Lower leg skin (tissue), 4 donors: ENCODE measurements at regions of chr12 and their contacts with region 1.

Region 1: DNA sequence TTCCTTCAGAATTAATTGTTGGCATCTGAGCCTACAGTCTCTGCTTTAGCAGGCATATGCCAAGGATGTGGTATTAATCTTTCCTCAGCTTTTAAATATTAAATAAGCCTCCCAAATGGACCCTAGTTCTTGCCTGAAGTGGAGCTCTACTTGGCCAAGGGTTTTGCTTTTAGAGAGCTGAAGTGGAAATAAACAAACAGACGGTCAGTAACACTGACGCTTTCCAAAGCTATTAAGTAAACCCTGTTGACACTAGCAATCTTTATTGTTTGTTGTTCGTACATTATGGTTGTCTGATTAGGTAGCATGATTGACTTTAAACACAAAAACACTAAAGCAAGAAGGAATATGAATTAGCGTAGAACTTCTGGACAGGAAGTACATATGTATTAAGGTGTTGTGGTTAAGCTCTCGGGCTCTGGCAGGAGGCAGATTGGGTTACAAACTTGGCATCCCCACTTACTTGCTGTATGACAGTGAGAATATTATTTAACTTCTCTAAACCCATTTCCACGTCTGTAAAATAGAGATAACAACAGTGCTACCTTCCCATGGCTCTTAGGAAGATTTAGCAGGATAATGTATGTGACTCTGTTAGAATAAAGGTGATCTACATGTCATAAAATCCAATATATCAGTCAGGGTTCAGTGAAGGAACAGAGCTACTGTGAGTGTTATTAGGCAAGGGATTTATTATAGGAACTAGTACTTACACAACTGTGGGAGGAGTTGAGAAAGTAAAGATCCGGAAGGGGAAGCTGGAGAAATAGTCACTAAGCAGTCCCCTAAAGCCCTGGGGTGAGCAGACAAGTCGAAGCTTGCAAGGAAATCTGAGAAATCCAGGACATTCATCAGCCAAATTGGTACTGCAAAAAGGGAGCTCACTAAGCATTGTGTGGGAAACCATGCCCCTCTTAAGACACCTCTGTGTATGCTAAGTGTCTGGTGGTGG is 92.2 kb upstream of the ATF7IP start:
- DNase-seq: peak in 1 of 2 donors; percentile 25
- H3K4me3 ChIP-seq: no peak overlapping the region
- CTCF ChIP-seq: no peak
- POLR2A ChIP-seq: no peak

Region 2: DNA sequence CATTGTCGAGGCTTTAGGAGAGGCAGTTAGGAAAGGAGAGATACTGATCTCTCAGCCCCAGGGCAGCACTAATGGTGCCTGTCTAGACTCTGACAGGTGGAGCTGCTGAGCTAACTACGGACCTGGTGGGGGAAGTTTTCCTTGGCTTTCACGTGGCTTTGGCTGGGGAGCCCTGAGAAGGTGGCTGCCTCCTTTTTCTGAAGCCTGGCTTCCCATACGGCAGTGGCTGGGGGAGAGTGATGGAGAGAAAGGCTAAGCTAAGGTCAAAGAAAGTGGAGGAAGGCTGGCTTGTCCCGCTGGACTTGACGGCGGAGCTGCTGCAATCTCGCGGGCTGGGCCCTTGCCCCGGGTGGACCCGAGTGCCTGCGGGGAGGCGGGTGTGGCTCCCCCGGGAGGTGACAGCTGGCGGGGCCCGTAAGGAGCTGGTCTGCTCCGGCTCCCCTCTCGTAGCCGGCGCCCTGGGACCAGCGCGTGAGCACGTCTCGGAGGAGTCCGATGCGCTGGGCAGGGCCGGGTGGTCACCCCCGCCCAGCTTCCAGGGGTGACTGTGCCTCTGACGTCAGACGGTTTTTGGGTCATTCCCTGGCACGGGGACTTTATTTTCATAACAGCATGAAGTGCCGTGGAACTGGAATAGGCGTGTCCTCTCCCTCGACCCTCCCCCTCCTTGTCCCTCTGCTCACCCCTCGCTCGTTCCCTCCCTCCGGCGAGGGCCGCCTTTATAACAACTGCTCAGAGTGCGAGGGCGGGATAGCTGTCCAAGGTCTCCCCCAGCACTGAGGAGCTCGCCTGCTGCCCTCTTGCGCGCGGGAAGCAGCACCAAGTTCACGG is 1382.2 kb before region 1 on chr12 and contains the start of gene GPRC5A:
- intact Hi-C with region 1: no loop called
- DNase-seq: peak; percentile 86 to 97
- H3K4me3 ChIP-seq: peak within 1 kb of the TSS; percentile 17
- CTCF ChIP-seq: no peak
- POLR2A ChIP-seq: no peak
- total RNA-seq, gene GPRC5A: 2.1 to 9.4 (median 5.3) TPM

Region 3: DNA sequence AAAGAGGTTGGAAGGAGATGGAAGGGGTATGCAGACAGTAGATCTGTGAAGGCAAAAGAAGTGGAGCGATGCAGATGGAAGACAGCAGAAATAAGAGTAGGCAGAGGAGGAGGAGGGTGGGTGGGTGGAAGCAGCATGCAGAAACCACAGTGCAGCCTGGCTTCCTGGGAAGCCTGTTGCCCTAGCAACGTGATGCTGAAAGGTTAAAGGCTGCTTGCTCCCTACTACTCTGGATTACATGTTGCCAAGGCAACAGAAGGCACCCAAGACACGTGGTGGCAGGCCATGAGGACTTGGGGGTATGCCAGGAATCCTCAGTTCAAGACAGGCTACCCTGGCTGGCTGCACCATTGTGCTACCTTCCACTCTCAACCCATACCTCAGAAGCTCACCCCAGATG is 421.4 kb before region 1 on chr12:
- intact Hi-C with region 1: no loop called
- DNase-seq: no peak
- H3K4me3 ChIP-seq: no peak overlapping the region
- CTCF ChIP-seq: no peak
- POLR2A ChIP-seq: no peak

Region 4: GRCh38 chr12:14225064-14225463 is 48.2 kb before region 1 on chr12:
- intact Hi-C with region 1: no loop called
- DNase-seq: no peak
- H3K4me3 ChIP-seq: no peak overlapping the region
- CTCF ChIP-seq: no peak
- POLR2A ChIP-seq: no peak

Region 5: DNA sequence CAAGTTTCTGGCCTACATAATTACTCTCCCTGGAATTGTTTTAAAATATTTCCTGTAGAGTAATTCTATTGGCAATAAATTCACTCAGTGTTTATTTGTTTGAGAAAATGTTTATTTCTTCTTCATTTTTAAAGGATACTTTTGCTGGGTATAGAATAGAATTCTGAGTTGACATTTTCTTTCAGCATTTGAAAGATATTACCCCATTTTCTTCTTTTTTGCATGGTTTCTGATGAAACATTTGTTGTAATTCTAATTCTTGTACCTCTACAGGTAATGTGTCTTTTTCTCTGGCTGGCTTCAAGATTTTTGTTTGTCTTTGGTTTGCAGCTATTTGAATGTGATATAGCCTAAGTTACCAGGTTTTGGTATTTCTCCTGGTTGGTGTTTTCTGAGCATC is 67.1 kb after region 1 on chr12:
- intact Hi-C with region 1: loop called (anchors 10 kb)
- DNase-seq: no peak
- H3K4me3 ChIP-seq: no peak overlapping the region
- CTCF ChIP-seq: no peak
- POLR2A ChIP-seq: no peak

Region 6: DNA sequence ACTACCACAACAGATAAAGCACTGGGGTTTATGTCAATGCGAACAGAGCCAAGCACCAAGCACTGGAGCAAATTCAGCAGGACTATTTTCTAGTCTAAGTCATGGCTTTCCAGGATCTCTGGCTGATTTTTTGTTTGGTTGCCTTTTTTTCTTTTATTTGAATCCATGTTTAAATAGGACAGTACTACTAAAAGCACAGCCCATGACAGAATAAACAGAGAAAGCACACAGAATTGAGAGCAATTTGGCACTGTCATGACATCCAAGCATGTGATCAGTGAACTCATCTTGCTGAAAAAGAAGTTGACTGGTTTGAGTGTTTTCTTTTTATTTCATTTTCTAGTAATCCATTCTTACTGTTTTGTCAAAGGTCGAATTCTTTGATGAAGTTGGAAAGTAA is 971.1 kb after region 1 on chr12:
- intact Hi-C with region 1: no loop called
- DNase-seq: no peak
- H3K4me3 ChIP-seq: no peak overlapping the region
- CTCF ChIP-seq: no peak
- POLR2A ChIP-seq: no peak